GM12878 (cell line): ENCODE measurements at regions of chr5 and their contacts with region 1.

Region 1: DNA sequence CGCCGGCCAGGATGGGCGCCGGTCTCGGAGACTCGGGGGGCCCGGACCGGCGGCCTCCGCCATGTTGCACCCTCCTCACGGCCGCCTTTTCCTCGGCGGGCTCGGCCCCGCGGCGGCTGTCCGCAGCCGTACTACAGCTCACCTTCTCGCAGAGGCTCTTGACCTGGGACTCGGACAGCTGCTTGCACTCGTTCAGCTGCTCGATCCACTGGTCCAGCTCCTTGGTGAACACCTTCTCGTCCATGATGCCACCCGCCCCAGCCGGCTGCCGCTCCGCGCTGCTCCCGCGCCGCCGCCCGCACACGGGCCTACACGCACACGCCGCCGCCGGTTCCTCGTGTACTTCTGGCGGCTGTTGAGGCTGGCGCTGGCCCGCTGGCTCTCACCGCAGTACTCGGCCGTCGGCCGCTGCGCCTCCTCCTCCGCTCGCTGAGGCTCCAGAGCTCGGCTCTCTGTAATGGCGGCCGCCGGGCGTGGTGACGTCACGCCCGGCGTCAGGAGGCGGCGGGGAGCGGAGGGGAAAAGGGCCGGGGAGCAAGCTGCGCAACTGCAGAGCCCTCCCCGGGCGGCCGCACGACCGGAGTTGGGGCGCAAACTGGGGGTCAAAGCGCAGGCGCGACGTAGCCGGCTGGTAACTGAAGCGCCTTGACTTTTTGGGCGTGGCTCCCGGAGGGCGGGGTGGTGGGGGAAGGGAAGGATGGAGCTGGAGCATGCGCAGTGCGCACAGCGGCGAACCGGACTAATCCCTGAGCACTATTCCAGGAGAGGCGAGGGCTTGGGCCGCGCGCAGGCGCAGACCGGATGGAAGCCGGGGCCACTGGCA is at the start of gene PPP2CA:
- DNase-seq: peak; percentile 98
- ATAC-seq: peak; percentile 85
- H3K4me3 ChIP-seq: peak within 1 kb of the TSS; percentile 94
- H3K27ac ChIP-seq: peak within 1 kb of the TSS; percentile 97
- H3K4me1 ChIP-seq: peaks cover 11% of the 10 kb centered on the region
- H3K27me3 ChIP-seq: no peaks in the 10 kb centered on the region
- CTCF ChIP-seq: no peak
- EP300 ChIP-seq: no peak; a peak in 1 of 4 replicates
- POLR2A ChIP-seq: peak; percentile 89
- RAD21 ChIP-seq: no peak
- polyA plus RNA-seq, gene PPP2CA: 18.6 to 30.9 TPM

Region 2: DNA sequence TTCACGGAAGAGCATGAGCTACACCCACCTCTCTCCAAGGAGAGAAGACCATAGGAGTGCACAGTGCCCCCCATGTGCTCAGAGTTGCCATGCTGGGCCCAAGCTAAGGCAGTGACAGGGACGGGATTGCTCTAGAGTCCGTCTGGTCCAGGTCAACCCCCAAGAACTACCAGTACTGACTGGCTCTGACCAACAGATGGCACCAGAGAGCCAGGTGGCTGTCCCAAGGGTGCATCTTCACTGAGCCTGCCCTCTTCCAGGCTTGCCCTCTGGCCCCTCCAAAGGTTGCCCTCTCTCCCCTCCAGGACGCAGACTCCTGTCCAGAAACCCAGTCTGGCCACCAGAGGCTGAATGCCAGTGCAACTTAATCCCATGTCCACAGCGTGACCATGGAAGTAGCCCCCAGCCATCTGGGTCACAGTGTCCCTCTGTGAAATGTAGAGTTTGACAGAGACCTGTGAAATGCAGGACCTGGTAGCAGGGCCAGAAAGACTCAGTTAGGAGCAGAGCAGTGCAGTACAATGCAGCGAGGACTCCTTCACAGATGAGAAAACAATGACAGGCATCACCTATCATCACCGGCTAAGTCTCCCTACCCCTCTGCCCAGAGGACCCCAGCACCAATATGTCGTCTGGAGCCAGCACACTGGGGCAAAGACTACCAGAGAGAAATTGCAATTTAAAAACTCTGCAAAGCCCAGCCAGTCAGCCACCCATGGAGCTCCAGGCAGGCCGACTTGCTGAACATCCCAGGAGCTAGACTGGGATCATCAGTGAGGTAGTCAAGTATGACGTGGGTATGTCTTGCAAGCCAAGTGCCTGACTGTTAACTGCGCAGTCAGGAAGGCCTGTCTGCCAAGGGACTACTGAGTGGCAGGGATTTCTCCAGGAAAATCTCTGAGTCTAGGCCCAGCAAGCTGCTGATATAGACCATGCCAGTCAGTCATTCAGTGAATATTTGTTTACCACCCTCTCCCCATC is 41.4 kb before region 1 on chr5:
- CTCF ChIA-PET with region 1: interaction called, 11 read pairs
- POLR2A ChIA-PET with region 1: no interaction called
- RAD21 ChIA-PET with region 1: interaction called, 5 read pairs
- SMC1A ChIA-PET with region 1: interaction called, 5 read pairs
- in situ Hi-C with region 1: no loop called
- intact Hi-C with region 1: no loop called
- DNase-seq: peak; percentile 16
- ATAC-seq: peak; percentile 99
- H3K4me3 ChIP-seq: no peak overlapping the region
- H3K27ac ChIP-seq: no peak overlapping the region
- H3K4me1 ChIP-seq: no peaks in the 10 kb centered on the region
- H3K27me3 ChIP-seq: no peaks in the 10 kb centered on the region
- CTCF ChIP-seq: peak; percentile 87 to 97 (median 89)
- EP300 ChIP-seq: no peak
- POLR2A ChIP-seq: no peak
- RAD21 ChIP-seq: peak; percentile 92

Region 3: DNA sequence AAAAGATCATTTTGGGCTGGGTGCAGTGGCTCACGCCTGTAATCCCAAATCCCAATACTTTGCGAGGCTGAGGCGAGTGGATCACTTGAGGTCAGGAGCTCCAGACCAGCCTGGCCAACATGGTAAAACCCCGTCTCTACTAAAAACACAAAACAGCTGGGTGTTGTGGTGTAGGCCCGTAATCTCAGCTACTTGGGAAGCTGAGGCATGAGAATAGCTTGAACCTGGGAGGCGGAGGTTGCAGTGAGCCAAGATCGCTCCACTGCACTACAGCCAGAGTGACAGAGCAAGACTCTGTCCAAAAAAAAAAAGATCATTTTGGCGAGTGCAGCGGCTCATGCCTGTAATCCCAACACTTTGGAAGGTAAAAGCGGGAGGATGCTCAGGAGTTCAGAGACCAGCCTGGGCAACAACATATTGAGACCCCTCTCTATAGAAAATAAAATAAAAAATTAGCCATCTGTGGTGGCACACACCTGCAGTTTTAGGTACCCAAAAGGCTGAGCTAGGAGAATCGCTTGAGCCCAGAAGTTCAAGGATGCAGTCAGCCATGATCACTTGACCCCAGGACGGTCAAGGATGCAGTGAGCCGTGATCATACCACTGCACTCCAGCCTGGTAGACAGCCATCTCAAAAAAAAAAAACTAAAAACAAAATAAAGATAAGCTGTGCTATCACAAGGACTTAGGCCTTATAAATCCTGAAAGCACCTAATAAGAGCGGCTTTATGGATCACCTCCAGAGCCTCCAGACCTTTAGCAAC is 16.2 kb before region 1 on chr5:
- CTCF ChIA-PET with region 1: interaction called, 7 read pairs
- POLR2A ChIA-PET with region 1: interaction called, 35 read pairs
- RAD21 ChIA-PET with region 1: interaction called, 9 read pairs
- SMC1A ChIA-PET with region 1: interaction called, 39 read pairs
- in situ Hi-C with region 1: no loop called
- intact Hi-C with region 1: no loop called
- DNase-seq: no peak
- ATAC-seq: no peak
- H3K4me3 ChIP-seq: no peak overlapping the region; the same call in 1 of the 2 replicates
- H3K27ac ChIP-seq: no peak overlapping the region
- H3K4me1 ChIP-seq: no peaks in the 10 kb centered on the region
- H3K27me3 ChIP-seq: no peaks in the 10 kb centered on the region
- CTCF ChIP-seq: no peak
- EP300 ChIP-seq: no peak
- POLR2A ChIP-seq: no peak
- RAD21 ChIP-seq: no peak

Region 4: DNA sequence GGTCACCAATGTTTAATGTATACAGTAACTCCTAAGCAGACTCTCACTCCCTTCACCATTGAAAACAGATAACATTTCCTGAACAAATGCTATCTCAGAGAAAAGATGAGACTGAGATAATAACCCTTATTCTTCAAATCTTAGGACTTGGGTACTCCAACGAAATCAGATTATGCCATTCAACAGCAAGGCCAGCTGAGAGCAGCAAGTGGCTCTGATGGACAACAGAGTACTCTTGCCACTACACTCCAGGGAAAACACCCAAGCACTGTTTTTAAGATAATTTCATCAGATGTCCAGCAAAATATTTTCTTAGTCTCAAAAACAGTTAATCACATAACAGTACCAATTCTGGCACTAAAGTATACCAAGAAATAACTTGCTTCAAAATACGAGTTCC is 10.1 kb before region 1 on chr5:
- CTCF ChIA-PET with region 1: interaction called, 5 read pairs
- POLR2A ChIA-PET with region 1: interaction called, 35 read pairs
- RAD21 ChIA-PET with region 1: interaction called, 9 read pairs
- SMC1A ChIA-PET with region 1: interaction called, 39 read pairs
- in situ Hi-C with region 1: no loop called
- intact Hi-C with region 1: no loop called
- DNase-seq: no peak
- ATAC-seq: no peak
- H3K4me3 ChIP-seq: no peak overlapping the region
- H3K27ac ChIP-seq: no peak overlapping the region
- H3K4me1 ChIP-seq: peaks cover 7% of the 10 kb centered on the region
- H3K27me3 ChIP-seq: no peaks in the 10 kb centered on the region
- CTCF ChIP-seq: no peak
- EP300 ChIP-seq: no peak
- POLR2A ChIP-seq: no peak
- RAD21 ChIP-seq: no peak

Region 5: GRCh38 chr5:134289509-134290113 is 63.8 kb after region 1 on chr5:
- CTCF ChIA-PET with region 1: interaction called, 14 read pairs
- POLR2A ChIA-PET with region 1: interaction called, 5 read pairs
- RAD21 ChIA-PET with region 1: interaction called, 10 read pairs
- SMC1A ChIA-PET with region 1: interaction called, 19 read pairs
- in situ Hi-C with region 1: no loop called
- intact Hi-C with region 1: no loop called
- DNase-seq: peak; percentile 24
- ATAC-seq: peak; percentile 96
- H3K4me3 ChIP-seq: no peak overlapping the region
- H3K27ac ChIP-seq: no peak overlapping the region
- H3K4me1 ChIP-seq: no peaks in the 10 kb centered on the region
- H3K27me3 ChIP-seq: no peaks in the 10 kb centered on the region
- CTCF ChIP-seq: peak; percentile 61 to 84 (median 63)
- EP300 ChIP-seq: no peak
- POLR2A ChIP-seq: no peak
- RAD21 ChIP-seq: peak; percentile 94

Region 6: DNA sequence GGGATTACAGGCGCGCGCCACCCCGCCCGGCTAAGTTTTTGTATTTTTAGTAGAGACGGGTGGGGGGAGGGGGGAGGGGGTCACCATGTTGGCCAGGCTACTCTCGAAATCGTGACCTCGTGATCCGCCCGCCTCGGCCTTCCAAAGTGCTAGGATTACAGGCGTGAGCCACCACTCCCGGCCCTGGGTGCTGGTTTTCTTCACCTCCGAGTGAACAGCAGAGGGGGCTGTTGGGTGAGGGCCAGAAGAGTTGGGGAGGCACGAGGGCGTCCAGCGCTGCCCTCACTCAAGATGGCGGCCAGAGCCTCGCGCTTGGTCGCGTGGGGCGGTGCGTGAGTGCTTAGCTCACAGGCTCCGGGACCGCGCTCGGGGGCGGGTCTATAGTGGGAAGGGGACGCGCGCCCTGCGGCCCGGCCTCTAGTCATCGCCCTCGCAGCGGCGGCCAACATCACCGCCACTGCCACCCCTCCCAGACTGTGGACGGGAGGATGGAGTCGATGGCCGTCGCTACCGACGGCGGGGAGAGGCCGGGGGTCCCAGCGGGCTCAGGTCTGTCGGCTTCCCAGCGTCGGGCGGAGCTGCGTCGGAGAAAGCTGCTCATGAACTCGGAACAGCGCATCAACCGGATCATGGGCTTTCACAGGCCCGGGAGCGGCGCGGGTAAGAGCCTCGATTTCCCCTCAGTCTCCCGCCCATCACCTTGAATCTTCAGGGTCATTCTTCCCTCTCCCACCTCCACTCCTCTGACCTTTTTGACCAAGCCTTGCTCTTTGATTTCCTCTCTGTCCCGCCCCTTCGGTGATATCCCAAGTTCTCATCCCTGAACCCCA is 512.5 kb after region 1 on chr5 and contains the start of gene CAMLG:
- CTCF ChIA-PET with region 1: interaction called, 3 read pairs
- POLR2A ChIA-PET with region 1: interaction called, 3 read pairs
- RAD21 ChIA-PET with region 1: no interaction called
- SMC1A ChIA-PET with region 1: interaction called, 3 read pairs
- in situ Hi-C with region 1: no loop called
- intact Hi-C with region 1: loop called (anchors 10 kb)
- DNase-seq: peak; percentile 92
- ATAC-seq: peak; percentile 97
- H3K4me3 ChIP-seq: peak within 1 kb of the TSS; percentile 90
- H3K27ac ChIP-seq: peak within 1 kb of the TSS; percentile 71
- H3K4me1 ChIP-seq: no peaks in the 10 kb centered on the region
- H3K27me3 ChIP-seq: no peaks in the 10 kb centered on the region
- CTCF ChIP-seq: peak; percentile 67 to 84 (median 74)
- EP300 ChIP-seq: no peak
- POLR2A ChIP-seq: peak; percentile 97
- RAD21 ChIP-seq: peak; percentile 60
- polyA plus RNA-seq, gene CAMLG: 27.0 to 51.7 TPM